ENCODE measurements at regions of chrX and their contacts with region 1.

Region 1: GRCh38 chrX:140762061-140762460 is 52.5 kb downstream of the LINC00632 start:
- DNase-seq: no peak
- H3K4me3 Mint-ChIP-seq: no peak overlapping the region
- H3K27ac Mint-ChIP-seq: no peak overlapping the region
- H3K4me1 Mint-ChIP-seq: no peaks in the 10 kb centered on the region
- H3K27me3 Mint-ChIP-seq: peaks cover 12% of the 10 kb centered on the region

Region 2: DNA sequence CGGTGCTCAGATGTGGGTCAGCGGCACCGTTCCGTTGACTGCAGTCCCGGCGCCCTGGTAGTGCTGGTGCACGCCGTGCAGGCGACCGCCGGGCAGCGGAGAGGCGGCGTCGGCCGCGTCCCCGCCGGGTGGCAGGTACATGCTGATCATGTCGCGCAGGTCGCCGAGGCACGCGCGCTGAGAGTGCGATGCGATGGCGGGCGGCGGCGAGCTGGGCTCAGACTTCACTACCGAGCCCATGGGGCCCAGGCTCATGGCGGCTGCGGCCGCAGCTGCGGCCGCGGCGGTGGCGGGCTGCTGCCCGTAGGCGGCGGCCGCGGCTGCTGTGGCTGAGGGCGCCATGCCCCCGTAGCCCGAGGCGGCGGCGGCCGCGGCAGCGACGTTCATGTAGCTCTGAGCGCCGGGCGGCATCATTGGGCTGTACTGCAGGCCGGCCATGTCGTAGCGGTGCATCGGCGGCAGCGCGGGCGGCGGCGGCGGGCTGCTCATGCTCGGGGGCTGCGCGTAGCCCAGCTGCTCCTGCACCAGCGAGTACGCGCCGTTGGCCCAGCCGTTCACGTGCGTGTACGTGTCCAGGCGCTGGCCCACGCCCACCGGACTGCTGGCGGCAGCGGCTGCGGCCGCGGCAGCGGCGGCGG is 258.2 kb before region 1 on chrX:
- intact Hi-C with region 1: loop called (anchors 10 kb)
- DNase-seq: no peak
- H3K4me3 Mint-ChIP-seq: no peak overlapping the region
- H3K27ac Mint-ChIP-seq: no peak overlapping the region
- H3K4me1 Mint-ChIP-seq: no peaks in the 10 kb centered on the region
- H3K27me3 Mint-ChIP-seq: peaks cover 55% of the 10 kb centered on the region

Region 3: DNA sequence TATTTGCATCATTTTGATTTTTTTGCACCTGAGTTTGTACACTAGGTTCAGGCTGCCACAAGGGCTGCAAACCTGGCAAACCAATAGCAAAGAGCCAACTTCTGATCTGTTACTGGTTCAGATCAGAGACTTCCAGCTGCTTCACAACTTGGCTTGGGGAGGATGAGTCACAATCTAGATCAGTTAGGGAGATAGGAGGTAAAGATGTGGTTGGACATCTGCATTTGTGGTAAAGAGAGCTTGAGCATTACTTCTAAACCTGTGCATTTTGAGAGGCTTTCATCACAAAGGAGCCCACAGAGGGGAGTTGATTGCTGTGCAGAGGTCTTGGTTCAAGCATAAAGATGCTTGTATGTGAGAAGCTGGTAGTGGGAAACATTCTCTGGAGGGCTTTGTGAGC is 18.0 kb before region 1 on chrX:
- intact Hi-C with region 1: no loop called
- DNase-seq: no peak
- H3K4me3 Mint-ChIP-seq: no peak overlapping the region
- H3K27ac Mint-ChIP-seq: no peak overlapping the region
- H3K4me1 Mint-ChIP-seq: peaks cover 6% of the 10 kb centered on the region
- H3K27me3 Mint-ChIP-seq: no peaks in the 10 kb centered on the region

Region 4: DNA sequence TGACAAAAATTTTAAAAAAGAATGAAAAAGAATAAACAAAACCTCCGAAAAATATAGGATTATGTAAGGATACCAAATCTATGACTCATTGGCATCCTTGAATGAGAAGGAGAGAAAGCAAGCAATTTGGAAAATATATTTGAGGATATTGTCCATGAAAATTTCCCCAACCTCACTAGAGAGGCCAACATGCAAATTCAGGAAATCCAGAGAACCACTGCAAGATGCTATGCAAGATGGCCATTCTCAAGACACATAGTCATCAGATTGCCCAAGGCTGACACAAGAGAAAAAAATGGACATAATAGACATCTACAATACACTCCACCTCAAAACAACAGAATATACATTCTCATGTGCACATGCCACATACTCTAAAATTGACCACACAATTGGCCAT is 104.4 kb after region 1 on chrX:
- intact Hi-C with region 1: no loop called
- DNase-seq: no peak
- H3K4me3 Mint-ChIP-seq: no peak overlapping the region
- H3K27ac Mint-ChIP-seq: no peak overlapping the region
- H3K4me1 Mint-ChIP-seq: no peaks in the 10 kb centered on the region
- H3K27me3 Mint-ChIP-seq: no peaks in the 10 kb centered on the region